Calu3 (cell line): ENCODE measurements at regions of chr17 and their contacts with region 1.

Region 1: GRCh38 chr17:75845049-75845860 is 1.1 kb upstream of the UNC13D start:
- DNase-seq: peak; percentile 96
- H3K4me3 Mint-ChIP-seq: peak overlapping the region; percentile 68
- H3K27ac Mint-ChIP-seq: peak overlapping the region; percentile 94
- H3K4me1 Mint-ChIP-seq: peaks cover 18% of the 10 kb centered on the region
- H3K27me3 Mint-ChIP-seq: no peaks in the 10 kb centered on the region
- CTCF ChIP-seq: peak; percentile 90

Region 2: GRCh38 chr17:75855310-75856081 is 10.2 kb after region 1 on chr17 and contains the start of gene WBP2:
- CTCF ChIA-PET with region 1: interaction called, 46 read pairs
- intact Hi-C with region 1: no loop called
- DNase-seq: peak; percentile 95
- H3K4me3 Mint-ChIP-seq: no peak within 1 kb of the TSS
- H3K27ac Mint-ChIP-seq: no peak within 1 kb of the TSS
- H3K4me1 Mint-ChIP-seq: peaks cover 8% of the 10 kb centered on the region
- H3K27me3 Mint-ChIP-seq: no peaks in the 10 kb centered on the region
- CTCF ChIP-seq: no peak
- total RNA-seq, gene WBP2: 126 and 133 TPM in 2 replicates

Region 3: GRCh38 chr17:75889454-75889853 is 44.2 kb after region 1 on chr17:
- CTCF ChIA-PET with region 1: no interaction called
- intact Hi-C with region 1: loop called (anchors 5 kb)
- DNase-seq: no peak
- H3K4me3 Mint-ChIP-seq: no peak overlapping the region
- H3K27ac Mint-ChIP-seq: no peak overlapping the region
- H3K4me1 Mint-ChIP-seq: no peaks in the 10 kb centered on the region
- H3K27me3 Mint-ChIP-seq: no peaks in the 10 kb centered on the region
- CTCF ChIP-seq: no peak

Region 4: DNA sequence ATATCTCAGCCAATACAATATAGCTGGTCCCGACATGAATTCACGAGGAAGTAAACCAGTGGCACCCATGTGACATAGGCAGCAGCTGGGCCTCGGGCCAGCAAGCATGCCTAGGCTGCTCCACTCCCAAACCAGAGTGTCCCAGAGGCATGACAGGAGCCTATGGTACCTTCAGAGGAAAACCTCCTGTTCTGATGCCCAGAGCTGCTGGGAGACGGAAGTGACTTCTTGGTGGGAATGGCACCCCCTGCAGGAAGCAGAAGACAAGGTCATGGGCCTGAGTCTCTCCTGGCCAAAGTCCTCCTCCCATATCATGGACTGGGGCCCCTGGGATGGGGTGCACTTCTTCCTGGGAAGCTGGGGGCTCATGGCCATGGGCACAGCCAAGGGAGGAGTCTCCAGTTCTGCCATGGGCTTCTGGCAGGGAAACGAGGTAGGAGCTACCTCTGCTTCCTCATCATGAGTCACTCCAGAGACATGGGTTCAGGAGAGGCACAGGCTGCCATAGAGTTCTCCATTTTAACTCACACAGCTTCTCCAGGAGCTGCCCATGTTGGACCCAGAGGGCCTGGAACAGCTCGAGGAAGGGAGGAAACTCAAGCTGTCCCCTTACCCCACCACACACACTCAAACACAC is 82.1 kb after region 1 on chr17:
- CTCF ChIA-PET with region 1: no interaction called
- intact Hi-C with region 1: no loop called
- DNase-seq: peak; percentile 13
- H3K4me3 Mint-ChIP-seq: no peak overlapping the region
- H3K27ac Mint-ChIP-seq: no peak overlapping the region
- H3K4me1 Mint-ChIP-seq: no peaks in the 10 kb centered on the region
- H3K27me3 Mint-ChIP-seq: no peaks in the 10 kb centered on the region
- CTCF ChIP-seq: no peak